PC-3 (cell line): ENCODE measurements at regions of chr17 and their contacts with region 1.

Region 1: DNA sequence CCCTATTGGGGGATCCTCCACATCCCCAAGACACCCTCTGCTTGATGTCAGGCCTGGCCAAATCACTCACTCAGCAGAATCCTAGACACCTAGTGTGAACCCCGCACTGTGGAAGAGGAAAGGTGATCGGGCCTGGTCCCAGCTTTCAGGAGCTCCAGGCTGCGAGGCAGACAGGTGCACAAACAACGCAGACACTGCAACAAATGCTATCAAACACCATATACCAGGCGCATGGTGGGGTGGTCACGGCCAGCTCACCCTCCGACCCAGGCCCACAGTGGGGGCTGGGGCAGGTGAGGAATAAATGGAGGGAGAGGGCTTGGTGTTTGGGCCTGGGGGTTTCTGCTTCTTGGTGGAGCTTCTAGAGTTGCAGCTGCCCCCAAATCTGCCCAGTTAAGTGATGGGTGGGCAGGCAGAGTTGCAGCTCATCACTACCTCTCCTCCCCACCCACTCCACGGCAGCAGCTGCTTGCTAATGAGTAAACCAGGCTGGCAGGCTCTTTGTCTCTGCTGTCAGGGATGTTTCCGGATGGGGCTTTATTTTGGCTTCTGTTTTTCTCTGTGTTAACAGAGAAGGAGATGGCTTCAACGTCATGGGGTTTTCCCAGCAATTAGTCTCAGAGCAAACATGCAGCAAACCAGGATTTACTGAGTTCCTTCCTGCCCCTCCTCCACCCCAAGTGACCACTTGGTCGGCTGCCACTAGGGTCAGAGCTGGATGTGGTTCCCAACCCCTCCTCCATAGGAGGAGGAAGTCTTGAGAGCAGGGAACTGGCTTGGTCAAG is 46.6 kb downstream of the PECAM1 start:
- DNase-seq: peak; percentile 91
- ATAC-seq: peak; percentile 81
- H3K4me3 ChIP-seq: no peak overlapping the region
- H3K27ac ChIP-seq: peak overlapping the region; percentile 92
- H3K4me1 ChIP-seq: peaks cover 32% of the 10 kb centered on the region
- H3K27me3 ChIP-seq: no peaks in the 10 kb centered on the region
- CTCF ChIP-seq: no peak

Region 2: GRCh38 chr17:64281962-64282727 is 61.9 kb before region 1 on chr17:
- CTCF ChIA-PET with region 1: no interaction called
- POLR2A ChIA-PET with region 1: no interaction called
- intact Hi-C with region 1: no loop called
- DNase-seq: peak; percentile 85
- ATAC-seq: peak; percentile 38
- H3K4me3 ChIP-seq: peak overlapping the region; percentile 2; the same call in 1 of the 2 replicates
- H3K27ac ChIP-seq: no peak overlapping the region
- H3K4me1 ChIP-seq: peaks cover 14% of the 10 kb centered on the region
- H3K27me3 ChIP-seq: no peaks in the 10 kb centered on the region
- CTCF ChIP-seq: peak; percentile 95

Region 3: GRCh38 chr17:64385187-64386083 is 41.4 kb after region 1 on chr17:
- CTCF ChIA-PET with region 1: no interaction called
- POLR2A ChIA-PET with region 1: interaction called, 14 read pairs
- intact Hi-C with region 1: no loop called
- DNase-seq: peak; percentile 98
- ATAC-seq: peak; percentile 73
- H3K4me3 ChIP-seq: peak overlapping the region; percentile 68
- H3K27ac ChIP-seq: peak overlapping the region; percentile 94
- H3K4me1 ChIP-seq: peaks cover 66% of the 10 kb centered on the region
- H3K27me3 ChIP-seq: no peaks in the 10 kb centered on the region
- CTCF ChIP-seq: no peak; the same call in 1 of the 2 replicates